ENCODE measurements at regions of chr20 and their contacts with region 1.

Region 1: DNA sequence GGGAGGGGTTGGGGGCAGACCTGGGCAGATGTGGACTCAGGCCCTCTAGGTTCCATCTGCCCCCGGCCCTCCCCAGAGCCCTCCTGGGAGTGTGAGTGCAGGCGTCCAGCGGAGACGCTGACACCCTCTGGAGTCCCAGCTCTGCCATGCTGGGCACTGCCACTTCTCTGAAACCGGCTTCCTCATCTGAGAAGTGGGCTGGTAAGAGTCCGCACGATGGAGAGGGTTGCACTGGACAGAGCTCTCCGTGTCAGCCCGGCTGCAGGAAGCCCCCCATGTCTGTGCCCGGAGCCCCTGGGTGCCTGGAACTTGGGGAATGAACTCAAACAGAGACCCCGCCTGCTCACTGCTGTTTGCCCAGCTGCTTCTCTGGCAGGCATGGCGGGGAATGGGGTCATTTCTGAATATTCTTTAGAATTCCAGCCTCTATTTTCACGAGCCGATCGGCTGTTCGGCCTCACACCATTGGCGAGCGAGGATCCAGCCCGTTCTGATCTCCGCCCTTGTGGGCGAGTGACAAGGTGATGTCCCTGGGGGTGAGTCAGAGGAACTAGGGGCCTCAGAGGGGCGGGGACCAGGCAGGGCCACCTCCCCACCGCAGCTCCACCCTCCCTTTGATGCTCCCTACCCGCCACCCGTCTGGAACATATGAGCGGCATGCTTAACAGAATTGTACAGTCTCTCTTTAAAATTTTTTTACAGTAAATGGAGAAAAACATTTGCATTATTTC is 47.8 kb upstream of the GATA5 start:
- DNase-seq: peak; percentile 63
- H3K4me3 Mint-ChIP-seq: peak overlapping the region; percentile 17
- H3K27ac Mint-ChIP-seq: peak overlapping the region; percentile 76
- H3K4me1 Mint-ChIP-seq: peaks cover 13% of the 10 kb centered on the region
- H3K27me3 Mint-ChIP-seq: no peaks in the 10 kb centered on the region

Region 2: DNA sequence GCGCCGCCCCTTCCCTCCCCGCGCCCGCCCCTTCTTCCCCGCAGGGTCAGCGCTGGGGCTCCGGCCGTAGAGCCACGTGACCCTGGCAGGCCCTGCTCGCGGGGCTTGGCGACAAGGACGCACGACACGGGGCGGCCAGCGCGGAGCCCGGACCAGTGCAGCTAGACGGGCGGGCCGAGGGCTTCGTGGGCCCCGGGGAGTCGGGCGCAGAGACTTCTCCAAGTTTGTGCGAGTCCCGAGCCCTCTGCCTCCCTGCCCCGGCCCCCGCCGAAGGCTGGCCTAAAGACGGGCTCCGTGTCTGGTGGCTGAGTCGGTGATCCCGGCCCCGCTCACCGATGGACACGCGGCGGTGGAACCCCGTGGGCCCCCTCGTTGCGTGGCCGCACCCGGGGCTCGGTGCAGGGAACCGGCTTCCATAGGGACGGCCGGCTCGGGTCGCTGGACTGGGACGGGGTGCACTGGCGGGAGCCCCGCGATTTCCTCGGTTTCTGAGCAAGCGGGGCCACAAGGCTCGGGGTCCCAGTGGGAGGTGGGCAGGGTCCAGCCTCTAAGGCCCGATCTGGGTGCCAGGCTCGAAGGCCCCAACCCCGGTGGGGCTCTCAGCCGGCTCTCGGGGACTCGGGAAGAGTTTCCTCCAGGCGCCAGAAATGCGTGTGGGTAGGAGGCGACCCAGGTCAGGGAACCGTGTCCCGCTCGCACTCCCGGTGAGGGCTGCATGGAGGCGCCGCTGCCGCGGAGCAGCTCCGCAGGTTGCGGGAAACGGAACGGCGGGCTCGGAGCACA is 47.4 kb before region 1 on chr20:
- intact Hi-C with region 1: no loop called
- DNase-seq: no peak
- H3K4me3 Mint-ChIP-seq: no peak overlapping the region
- H3K27ac Mint-ChIP-seq: no peak overlapping the region
- H3K4me1 Mint-ChIP-seq: no peaks in the 10 kb centered on the region
- H3K27me3 Mint-ChIP-seq: peaks cover 43% of the 10 kb centered on the region

Region 3: DNA sequence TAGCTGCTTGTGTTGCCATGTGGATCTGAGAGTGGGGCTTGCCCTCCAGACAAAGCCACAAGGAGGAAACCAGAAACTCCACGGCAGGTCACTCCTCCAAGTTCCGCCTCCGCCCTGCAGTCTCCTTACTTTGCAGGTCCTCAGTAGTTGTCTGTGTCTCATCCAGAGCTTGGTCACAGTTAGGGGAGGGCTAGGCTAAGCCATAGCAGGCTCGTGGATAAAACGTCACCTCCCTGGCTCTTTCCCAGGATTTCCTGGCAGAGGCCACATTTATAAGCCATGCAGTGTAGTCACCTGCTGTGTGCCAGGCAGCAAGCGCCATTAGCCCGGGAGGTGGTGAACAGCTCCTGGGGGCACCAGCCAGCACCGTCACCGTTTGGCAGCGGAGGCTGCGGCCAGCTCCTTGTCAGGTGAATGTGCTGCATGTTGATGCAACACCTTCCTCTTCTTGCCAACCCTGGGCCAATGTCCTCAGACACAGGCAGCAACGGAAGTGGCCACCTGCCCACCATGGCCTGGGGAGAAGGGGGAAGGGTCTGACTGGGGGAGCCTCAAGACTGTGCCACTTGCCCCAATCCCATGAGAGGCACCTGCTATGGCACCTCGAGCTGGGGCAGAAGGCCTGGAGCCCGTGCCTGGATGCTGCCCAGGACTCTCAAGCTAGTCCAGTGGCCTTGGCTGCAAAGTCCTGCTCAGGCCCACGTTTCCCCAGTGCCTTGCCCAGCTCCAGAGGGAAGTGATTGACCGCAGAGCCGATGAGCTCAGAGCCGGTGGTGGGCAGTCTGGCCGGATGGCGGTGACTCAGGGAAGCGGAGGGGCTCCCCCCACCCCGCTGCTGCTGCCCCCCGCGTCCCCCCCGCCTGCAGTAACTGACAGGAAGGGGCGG is 79.6 kb after region 1 on chr20:
- intact Hi-C with region 1: loop called (anchors 1 kb)
- DNase-seq: peak; percentile 34
- H3K4me3 Mint-ChIP-seq: peak overlapping the region; percentile 66
- H3K27ac Mint-ChIP-seq: peak overlapping the region; percentile 56
- H3K4me1 Mint-ChIP-seq: peaks cover 37% of the 10 kb centered on the region
- H3K27me3 Mint-ChIP-seq: peaks cover 8% of the 10 kb centered on the region

Measured in activated T-helper 2 cell treated with anti-CD3 and anti-CD28 coated beads, Interferon-gamma antibody, Interleukin-2, Interleukin-4, amounts not matched to agents 10 μg/mL and 5 μg/mL and 100 μg/mL, durations not matched to agents 14 hours and 24 hours and 36 hours (primary cell).